ENCODE measurements at regions of chr2 and their contacts with region 1.

Region 1: GRCh38 chr2:117835990-117836760 is 21.7 kb downstream of the DDX18 start:
- DNase-seq: peak; percentile 82 to 86
- ATAC-seq: peak; percentile 94 to 97 (median 96)
- H3K4me3 ChIP-seq: peak overlapping the region; percentile 24 to 66 (median 51)
- H3K27ac ChIP-seq: peak overlapping the region in 7 of 10 donors; percentile 11 to 67 (median 46)
- H3K4me1 ChIP-seq: peaks cover 0 to 17% (median 8%) of the 10 kb centered on the region in 9 donors
- H3K27me3 ChIP-seq: peaks cover 0 to 8% (median 0%) of the 10 kb centered on the region in 7 donors
- CTCF ChIP-seq: peak; percentile 61 to 92 (median 82)

Region 2: GRCh38 chr2:117917223-117917917 is 81.2 kb after region 1 on chr2:
- intact Hi-C with region 1: loop called in 1 of 10 experiments (anchors 10 kb)
- DNase-seq: no peak
- ATAC-seq: peak in 6 of 8 donors; percentile 13 to 64 (median 36)
- H3K4me3 ChIP-seq: no peak overlapping the region
- H3K27ac ChIP-seq: no peak overlapping the region
- H3K4me1 ChIP-seq: peaks cover 0 to 11% (median 0%) of the 10 kb centered on the region in 9 donors
- H3K27me3 ChIP-seq: no peaks in the 10 kb centered on the region
- CTCF ChIP-seq: peak in 5 of 9 donors; percentile 11 to 50 (median 28)

Region 3: GRCh38 chr2:117936871-117937428 is 100.8 kb after region 1 on chr2:
- intact Hi-C with region 1: loop called in 2 of 10 experiments (anchors 10 kb)
- DNase-seq: peak in 1 of 2 donors; percentile 32
- ATAC-seq: peak in 7 of 8 donors; percentile 49 to 84 (median 79)
- H3K4me3 ChIP-seq: no peak overlapping the region
- H3K27ac ChIP-seq: peak overlapping the region in 7 of 10 donors; percentile 3 to 71 (median 27)
- H3K4me1 ChIP-seq: peaks cover 0 to 31% (median 14%) of the 10 kb centered on the region in 9 donors
- H3K27me3 ChIP-seq: no peaks in the 10 kb centered on the region
- CTCF ChIP-seq: no peak

Region 4: GRCh38 chr2:118003396-118003824 is 167.2 kb after region 1 on chr2:
- intact Hi-C with region 1: loop called in 9 of 10 experiments (anchors 1 to 10 kb)
- DNase-seq: peak in 1 of 2 donors; percentile 63
- ATAC-seq: peak; percentile 58 to 93 (median 88)
- H3K4me3 ChIP-seq: no peak overlapping the region
- H3K27ac ChIP-seq: no peak overlapping the region
- H3K4me1 ChIP-seq: peaks cover 0 to 48% (median 17%) of the 10 kb centered on the region in 9 donors
- H3K27me3 ChIP-seq: no peaks in the 10 kb centered on the region
- CTCF ChIP-seq: peak; percentile 71 to 88 (median 84)

Region 5: GRCh38 chr2:118013724-118014491 is 177.7 kb after region 1 on chr2 and contains the start of gene CCDC93:
- intact Hi-C with region 1: loop called in 4 of 10 experiments (anchors 5 to 10 kb)
- DNase-seq: peak; percentile 78 to 89
- ATAC-seq: peak; percentile 92 to 97 (median 96)
- H3K4me3 ChIP-seq: peak within 1 kb of the TSS; percentile 82 to 100 (median 97)
- H3K27ac ChIP-seq: peak within 1 kb of the TSS; percentile 83 to 99 (median 96)
- H3K4me1 ChIP-seq: peaks cover 0 to 69% (median 33%) of the 10 kb centered on the region in 9 donors
- H3K27me3 ChIP-seq: peaks cover 0 to 6% (median 0%) of the 10 kb centered on the region in 7 donors
- CTCF ChIP-seq: no peak
- total RNA-seq, gene CCDC93: 23.2 to 43.7 (median 30.4) TPM